CD8-positive, alpha-beta T cell (primary cell): ENCODE measurements at regions of chr19 and their contacts with region 1.

Region 1: DNA sequence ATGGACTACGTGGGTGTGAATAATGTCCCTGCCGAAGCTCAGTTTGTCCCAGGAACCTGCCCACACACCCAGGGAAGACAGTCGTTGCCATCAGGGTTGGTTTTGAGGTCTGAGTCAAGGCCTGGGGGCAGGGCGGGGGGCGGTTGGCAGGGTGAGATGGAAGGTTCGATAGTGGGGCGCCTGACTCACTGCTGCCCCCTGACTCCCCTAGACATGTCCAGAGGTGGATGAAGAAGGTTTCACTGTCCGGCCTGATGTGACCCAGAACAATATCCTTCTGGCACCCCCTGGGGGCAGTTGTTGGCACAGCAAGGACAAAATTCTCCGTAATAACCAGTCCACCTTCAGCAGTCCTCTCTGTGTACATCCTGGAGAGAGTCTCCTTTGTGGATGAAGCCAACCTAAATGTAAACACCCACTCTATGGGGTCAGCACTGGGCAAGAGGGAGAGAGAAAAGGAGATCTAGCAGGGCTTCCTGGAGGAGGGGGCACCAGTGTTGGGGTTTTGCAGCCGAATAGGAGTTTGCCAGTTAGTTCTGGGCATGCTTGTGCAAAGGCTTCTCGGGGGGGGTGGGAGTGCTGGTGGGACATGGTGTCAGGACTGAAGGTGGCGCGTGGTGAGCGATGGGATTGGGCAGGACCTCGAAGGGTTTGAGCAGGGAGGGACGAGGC is 19.6 kb upstream of the B3GNT3 start:
- DNase-seq: peak in 5 of 9 experiments; percentile 46 to 61 (median 49)
- ATAC-seq: no peak
- H3K4me3 ChIP-seq: no peak overlapping the region
- H3K4me3 Mint-ChIP-seq: no peak overlapping the region
- H3K27ac ChIP-seq: no peak overlapping the region
- H3K27ac Mint-ChIP-seq: no peak overlapping the region
- H3K4me1 ChIP-seq: no peaks in the 10 kb centered on the region
- H3K4me1 Mint-ChIP-seq: peaks cover 3% of the 10 kb centered on the region
- H3K27me3 ChIP-seq: no peaks in the 10 kb centered on the region
- H3K27me3 Mint-ChIP-seq: no peaks in the 10 kb centered on the region
- CTCF ChIP-seq: peak; percentile 58

Region 2: DNA sequence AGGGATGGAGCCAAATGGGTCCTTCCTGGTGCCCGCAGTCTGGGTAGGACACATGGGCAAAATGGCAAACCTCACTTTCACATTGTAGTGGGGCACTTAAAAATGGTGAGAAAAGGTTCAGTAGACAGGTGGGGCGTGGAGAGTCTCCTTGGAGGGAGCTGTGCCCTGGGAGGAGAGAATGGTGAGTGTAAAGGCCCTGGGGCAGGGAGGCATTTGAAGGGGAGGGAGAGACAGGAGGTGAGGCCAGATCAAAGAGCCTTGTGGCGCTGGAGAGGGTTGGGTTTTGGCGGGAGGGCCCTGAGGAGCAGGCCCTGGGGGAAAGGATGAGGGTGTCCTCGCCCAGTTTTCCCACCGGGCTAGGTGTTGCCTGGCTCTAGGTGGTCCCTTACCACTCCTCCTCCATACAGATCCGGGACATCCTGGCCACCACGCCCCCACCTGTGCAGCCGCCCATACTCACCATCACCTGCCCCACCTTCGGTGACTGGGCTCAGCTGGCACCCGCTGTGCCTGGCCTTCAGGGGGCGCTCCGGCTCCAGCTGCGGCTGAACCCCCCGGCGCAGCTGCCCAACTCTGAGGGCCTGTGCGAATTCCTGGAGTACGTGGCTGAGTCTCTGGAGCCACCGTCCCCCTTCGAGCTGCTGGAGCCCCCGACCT is 49.8 kb before region 1 on chr19:
- CTCF ChIA-PET with region 1: interaction called, 12 read pairs
- POLR2A ChIA-PET with region 1: no interaction called
- intact Hi-C with region 1: no loop called
- DNase-seq: peak in 4 of 9 experiments; percentile 22 to 37 (median 26)
- ATAC-seq: no peak
- H3K4me3 ChIP-seq: no peak overlapping the region
- H3K4me3 Mint-ChIP-seq: no peak overlapping the region
- H3K27ac ChIP-seq: no peak overlapping the region
- H3K27ac Mint-ChIP-seq: peak overlapping the region; percentile 45
- H3K4me1 ChIP-seq: peaks cover 17% of the 10 kb centered on the region
- H3K4me1 Mint-ChIP-seq: peaks cover 35% of the 10 kb centered on the region
- H3K27me3 ChIP-seq: no peaks in the 10 kb centered on the region
- H3K27me3 Mint-ChIP-seq: no peaks in the 10 kb centered on the region
- CTCF ChIP-seq: no peak